Activated T-helper 1 cell treated with anti-CD3 and anti-CD28 coated beads, Interleukin-12 subunit alpha, Interleukin-12 subunit beta, Interleukin-2, Interleukin-4 antibody, amounts not matched to agents 30 ng/mL and 10 ng/mL and 1 ng/mL, durations not matched to agents 14 hours and 24 hours and 36 hours (primary cell): ENCODE measurements at regions of chr3 and their contacts with region 1.

Region 1: GRCh38 chr3:12967606-12968351 is 105.5 kb downstream of the IQSEC1 start:
- DNase-seq: peak; percentile 83
- H3K4me3 Mint-ChIP-seq: peak overlapping the region; percentile 64
- H3K27ac Mint-ChIP-seq: peak overlapping the region; percentile 4
- H3K4me1 Mint-ChIP-seq: peaks cover 51% of the 10 kb centered on the region
- H3K27me3 Mint-ChIP-seq: no peaks in the 10 kb centered on the region

Region 2: GRCh38 chr3:12868039-12869034 is 99.4 kb before region 1 on chr3:
- intact Hi-C with region 1: loop called (anchors 1 kb)
- DNase-seq: peak; percentile 43
- H3K4me3 Mint-ChIP-seq: peak overlapping the region; percentile 65
- H3K27ac Mint-ChIP-seq: no peak overlapping the region
- H3K4me1 Mint-ChIP-seq: peaks cover 17% of the 10 kb centered on the region
- H3K27me3 Mint-ChIP-seq: peaks cover 29% of the 10 kb centered on the region

Region 3: DNA sequence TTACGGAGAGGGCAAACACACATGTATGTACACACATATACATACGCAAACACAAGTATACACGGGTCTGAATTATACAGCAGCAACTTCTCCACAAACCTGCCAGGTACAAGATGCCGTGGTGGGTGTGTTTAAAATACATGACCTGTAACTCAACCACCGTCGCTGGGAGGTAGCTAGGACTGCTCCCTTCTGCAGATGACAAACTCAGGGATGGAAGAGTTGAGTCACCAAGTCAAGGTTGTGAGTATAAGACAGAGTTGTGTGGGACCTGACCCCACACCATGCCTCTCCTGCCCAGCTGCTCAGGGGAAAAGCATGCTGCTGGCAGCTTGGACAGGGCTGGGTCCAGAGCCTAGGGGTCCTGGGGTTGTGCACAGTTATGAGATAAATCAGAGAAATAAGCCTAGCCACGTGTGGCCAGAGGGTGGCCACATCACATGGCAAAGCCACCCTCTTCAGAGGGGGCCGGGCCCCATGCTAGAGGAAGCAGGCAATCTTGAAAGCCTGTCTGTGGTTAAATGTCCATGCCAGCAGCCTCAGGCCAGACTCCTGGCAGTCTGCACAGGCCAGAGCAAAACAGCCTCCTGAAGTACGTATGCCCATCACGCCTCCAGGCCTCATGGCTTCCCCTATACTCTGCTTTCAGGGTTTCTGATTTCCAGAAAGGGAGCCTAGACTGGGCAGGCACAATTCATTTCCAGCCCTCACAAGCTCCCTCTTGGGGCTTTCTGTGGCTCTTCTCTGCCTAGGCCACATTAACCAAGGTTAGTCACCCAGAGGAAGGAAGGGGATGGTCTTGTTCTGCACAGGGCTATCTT is 18.7 kb before region 1 on chr3:
- intact Hi-C with region 1: loop called (anchors 2 kb)
- DNase-seq: peak; percentile 32
- H3K4me3 Mint-ChIP-seq: peak overlapping the region; percentile 31
- H3K27ac Mint-ChIP-seq: peak overlapping the region; percentile 88
- H3K4me1 Mint-ChIP-seq: peaks cover 40% of the 10 kb centered on the region
- H3K27me3 Mint-ChIP-seq: no peaks in the 10 kb centered on the region

Region 4: GRCh38 chr3:13012228-13012691 is 44.5 kb after region 1 on chr3:
- intact Hi-C with region 1: loop called (anchors 1 kb)
- DNase-seq: peak; percentile 43
- H3K4me3 Mint-ChIP-seq: peak overlapping the region; percentile 80
- H3K27ac Mint-ChIP-seq: peak overlapping the region; percentile 99
- H3K4me1 Mint-ChIP-seq: peaks cover 85% of the 10 kb centered on the region
- H3K27me3 Mint-ChIP-seq: no peaks in the 10 kb centered on the region

Region 5: GRCh38 chr3:13161024-13161759 is 193.4 kb after region 1 on chr3:
- intact Hi-C with region 1: no loop called
- DNase-seq: no peak
- H3K4me3 Mint-ChIP-seq: no peak overlapping the region
- H3K27ac Mint-ChIP-seq: no peak overlapping the region
- H3K4me1 Mint-ChIP-seq: no peaks in the 10 kb centered on the region
- H3K27me3 Mint-ChIP-seq: peaks cover 6% of the 10 kb centered on the region

Region 6: DNA sequence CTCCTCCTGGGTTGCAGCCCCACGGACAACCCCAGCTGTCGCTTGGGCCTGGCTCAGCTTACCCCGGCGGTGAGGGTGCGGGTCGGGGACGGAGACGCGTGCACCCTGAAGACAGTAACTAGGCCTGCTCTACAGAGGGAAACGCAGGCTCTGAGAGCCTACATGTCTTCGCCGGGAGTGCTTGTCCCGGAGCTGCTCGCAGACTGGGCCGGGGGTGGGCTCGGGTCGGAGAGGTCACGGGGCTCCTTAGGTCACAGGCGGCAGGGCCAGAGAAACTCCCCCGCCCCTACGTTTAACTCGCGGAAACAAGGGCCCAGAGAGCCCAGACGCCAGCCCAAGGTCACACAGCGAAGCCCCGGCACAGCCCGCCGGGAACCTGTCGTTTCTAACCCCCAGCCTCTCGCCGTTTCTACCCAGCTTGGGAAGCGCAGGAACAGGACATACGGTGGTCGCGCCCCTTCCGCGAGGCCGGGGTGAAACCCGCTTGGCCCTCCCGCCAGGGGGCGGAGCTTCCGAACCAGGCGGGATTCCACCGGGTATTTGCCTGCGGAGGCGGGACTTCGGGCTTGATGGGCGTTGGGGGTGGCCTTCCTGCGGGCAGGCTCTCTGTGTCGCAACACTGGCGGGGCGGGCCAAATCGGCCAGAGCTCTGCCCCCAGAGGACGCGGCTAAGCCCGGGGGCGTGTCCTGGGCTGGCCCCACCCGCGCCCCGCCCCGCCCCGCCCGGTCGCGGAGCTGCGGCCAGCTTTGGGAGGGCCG is 512.0 kb after region 1 on chr3 and contains the start of gene HDAC11:
- intact Hi-C with region 1: loop called (anchors 1 kb)
- DNase-seq: peak; percentile 98
- H3K4me3 Mint-ChIP-seq: peak within 1 kb of the TSS; percentile 88
- H3K27ac Mint-ChIP-seq: peak within 1 kb of the TSS; percentile 84
- H3K4me1 Mint-ChIP-seq: peaks cover under 1% of the 10 kb centered on the region
- H3K27me3 Mint-ChIP-seq: peaks cover 7% of the 10 kb centered on the region
- total RNA-seq, gene HDAC11: 1.4 and 2.0 TPM in 2 replicates